ENCODE measurements at regions of chr5 and their contacts with region 1.

Region 1: GRCh38 chr5:134304311-134304710 is 62.7 kb downstream of the CDKL3 start:
- DNase-seq: no peak
- CTCF ChIP-seq: no peak

Region 2: DNA sequence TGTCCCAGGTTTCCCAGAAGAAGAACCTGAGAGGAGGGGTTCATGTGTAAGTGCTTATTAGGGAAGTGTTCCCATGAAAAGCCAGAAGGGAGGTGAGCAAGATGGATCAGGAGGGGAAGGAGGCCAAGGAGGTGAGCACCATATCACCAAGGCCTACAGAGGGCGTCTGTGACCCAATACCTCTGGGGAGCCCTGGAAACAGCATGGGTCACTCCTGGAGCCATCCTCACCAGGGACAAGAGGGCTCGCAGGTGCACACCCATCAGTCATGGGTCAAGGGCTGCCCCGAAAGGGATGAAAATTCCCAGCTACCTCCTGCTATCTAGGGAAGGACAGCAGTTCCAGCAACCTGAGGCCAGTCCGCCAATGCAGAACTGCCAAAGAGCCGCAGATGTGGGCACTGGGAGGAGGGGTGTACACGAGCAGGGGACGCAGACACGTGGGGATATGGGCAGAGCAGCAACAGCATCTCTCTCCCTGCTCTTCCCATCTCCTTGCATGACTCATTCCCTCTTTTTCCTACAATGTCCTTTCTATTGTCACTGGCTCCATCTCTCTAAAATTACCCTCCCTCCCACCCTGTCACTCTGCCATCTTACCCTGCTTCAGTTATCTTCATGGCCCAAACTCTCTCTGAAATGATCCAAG is 524.4 kb before region 1 on chr5:
- in situ Hi-C with region 1: no loop called
- DNase-seq: no peak
- CTCF ChIP-seq: peak; percentile 41

Region 3: DNA sequence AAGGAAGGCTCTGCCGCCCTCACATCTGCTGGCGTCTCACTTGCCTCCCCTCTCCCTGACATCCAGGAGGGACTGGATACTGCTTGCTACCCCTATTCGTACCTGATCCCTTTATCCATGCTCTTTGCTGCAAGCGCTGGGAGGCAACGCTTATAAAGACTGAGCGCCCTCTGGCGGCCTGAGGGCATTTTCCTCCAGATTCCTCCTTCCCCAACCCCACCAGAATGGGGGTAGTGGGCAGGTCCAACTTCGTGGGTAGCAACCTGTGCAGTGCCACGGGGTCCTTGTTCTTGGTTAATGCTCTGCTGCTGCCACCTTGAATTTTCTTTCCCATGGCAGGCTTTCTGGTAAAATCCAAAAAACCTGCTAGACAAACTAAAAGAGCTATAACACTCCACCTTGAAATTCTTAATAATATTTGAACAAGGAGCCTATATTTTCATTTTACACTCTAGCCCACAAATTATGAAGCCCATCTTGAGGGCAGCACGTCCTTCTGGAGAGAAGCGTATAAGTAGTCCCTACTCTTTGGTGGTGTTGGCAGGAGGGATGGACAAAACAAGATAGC is 273.6 kb after region 1 on chr5:
- in situ Hi-C with region 1: loop called (anchors 5 kb)
- DNase-seq: peak; percentile 86
- CTCF ChIP-seq: peak; percentile 90

Measured in GM13977 (cell line).